Common myeloid progenitor, CD34-positive (primary cell): ENCODE measurements at regions of chr1 and their contacts with region 1.

Region 1: GRCh38 chr1:223123011-223123610 is 19.9 kb downstream of the TLR5 start:
- DNase-seq: no peak
- H3K4me3 ChIP-seq: peak overlapping the region in 1 of 7 experiments; percentile 43
- H3K27ac ChIP-seq: no peak overlapping the region
- H3K4me1 ChIP-seq: peaks cover 0 to 6% (median 2%) of the 10 kb centered on the region in 4 experiments
- H3K27me3 ChIP-seq: peaks cover 0 to 6% (median 0%) of the 10 kb centered on the region in 5 experiments

Region 2: DNA sequence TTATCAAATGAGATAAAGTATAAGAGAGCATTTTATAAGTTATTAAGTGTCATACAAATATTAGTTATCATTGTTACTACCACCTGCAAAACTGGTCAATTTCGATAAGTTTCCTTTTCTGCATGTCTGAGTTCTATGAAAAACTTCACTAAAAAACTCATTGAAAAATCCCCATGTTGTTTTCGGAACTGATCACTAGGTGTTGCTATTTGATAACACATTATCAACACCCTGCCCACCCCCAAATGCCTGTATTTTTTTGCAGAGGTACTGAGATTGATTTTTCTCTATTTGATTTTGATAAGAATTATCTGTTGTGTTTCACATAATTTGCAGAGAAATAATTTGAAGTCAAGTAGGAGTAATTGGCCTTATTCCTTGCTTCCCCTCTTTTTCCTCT is 330.4 kb before region 1 on chr1:
- CTCF ChIA-PET with region 1: interaction called, 10 read pairs
- POLR2A ChIA-PET with region 1: no interaction called
- DNase-seq: peak; percentile 44 to 63 (median 58)
- H3K4me3 ChIP-seq: no peak overlapping the region
- H3K27ac ChIP-seq: no peak overlapping the region
- H3K4me1 ChIP-seq: no peaks in the 10 kb centered on the region
- H3K27me3 ChIP-seq: no peaks in the 10 kb centered on the region

Region 3: DNA sequence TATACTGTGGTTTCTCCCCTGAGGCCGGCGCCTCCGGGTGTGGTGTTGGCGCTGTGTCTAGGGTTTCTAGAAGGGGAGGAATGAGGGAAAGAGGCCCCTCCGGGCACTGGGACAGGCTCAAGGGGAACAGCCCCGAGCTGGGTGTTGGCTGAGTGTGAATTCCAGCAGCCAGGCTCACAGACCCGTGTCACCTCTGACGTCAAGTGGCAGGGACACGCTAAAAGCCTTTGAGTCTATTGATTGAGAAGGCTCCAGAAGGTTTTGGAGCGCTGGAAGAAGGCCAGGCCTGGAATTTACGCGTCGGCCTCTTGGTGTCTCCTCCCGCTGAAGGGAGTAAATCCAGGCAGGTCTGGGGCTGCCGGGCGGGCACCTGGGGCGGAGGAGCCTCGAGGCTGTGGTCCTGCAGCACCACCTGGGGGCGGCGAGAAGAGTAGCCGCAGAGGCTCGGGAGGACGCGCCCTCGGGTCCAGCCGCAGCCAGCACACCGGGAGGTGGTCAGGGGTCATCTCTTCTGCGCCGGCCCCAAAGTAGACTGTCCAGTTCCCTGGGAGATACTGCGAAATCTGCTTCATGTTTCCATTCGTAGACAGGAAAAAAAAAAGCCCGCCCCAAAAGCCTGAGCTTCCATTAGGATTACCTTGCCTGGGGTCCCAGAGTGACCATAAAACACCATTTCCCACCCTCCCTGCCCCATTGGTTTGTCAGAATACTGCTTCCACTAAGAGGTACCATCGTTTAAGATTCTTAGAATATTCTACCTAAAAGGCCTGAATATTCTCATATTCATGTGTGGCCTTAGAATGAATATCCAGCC is 41.7 kb before region 1 on chr1:
- CTCF ChIA-PET with region 1: interaction called, 63 read pairs
- POLR2A ChIA-PET with region 1: no interaction called
- DNase-seq: peak; percentile 94 to 96 (median 95)
- H3K4me3 ChIP-seq: peak overlapping the region in 6 of 7 experiments; percentile 47 to 76 (median 65)
- H3K27ac ChIP-seq: no peak overlapping the region
- H3K4me1 ChIP-seq: peaks cover 0 to 3% (median 1%) of the 10 kb centered on the region in 4 experiments
- H3K27me3 ChIP-seq: no peaks in the 10 kb centered on the region

Region 4: GRCh38 chr1:223133824-223134435 is 10.8 kb after region 1 on chr1:
- CTCF ChIA-PET with region 1: interaction called, 30 read pairs
- POLR2A ChIA-PET with region 1: no interaction called
- DNase-seq: peak; percentile 71 to 75 (median 72)
- H3K4me3 ChIP-seq: peak overlapping the region in 5 of 7 experiments; percentile 9 to 44 (median 30)
- H3K27ac ChIP-seq: no peak overlapping the region
- H3K4me1 ChIP-seq: peaks cover 4 to 16% (median 7%) of the 10 kb centered on the region in 4 experiments
- H3K27me3 ChIP-seq: peaks cover 0 to 55% (median 32%) of the 10 kb centered on the region in 5 experiments

Region 5: GRCh38 chr1:223258741-223259198 is 135.7 kb after region 1 on chr1:
- CTCF ChIA-PET with region 1: no interaction called
- POLR2A ChIA-PET with region 1: no interaction called
- DNase-seq: no peak
- H3K4me3 ChIP-seq: no peak overlapping the region
- H3K27ac ChIP-seq: no peak overlapping the region
- H3K4me1 ChIP-seq: no peaks in the 10 kb centered on the region
- H3K27me3 ChIP-seq: peaks cover 0 to 5% (median 0%) of the 10 kb centered on the region in 5 experiments